WTC11 (cell line): ENCODE measurements at regions of chr2 and their contacts with region 1.

Region 1: DNA sequence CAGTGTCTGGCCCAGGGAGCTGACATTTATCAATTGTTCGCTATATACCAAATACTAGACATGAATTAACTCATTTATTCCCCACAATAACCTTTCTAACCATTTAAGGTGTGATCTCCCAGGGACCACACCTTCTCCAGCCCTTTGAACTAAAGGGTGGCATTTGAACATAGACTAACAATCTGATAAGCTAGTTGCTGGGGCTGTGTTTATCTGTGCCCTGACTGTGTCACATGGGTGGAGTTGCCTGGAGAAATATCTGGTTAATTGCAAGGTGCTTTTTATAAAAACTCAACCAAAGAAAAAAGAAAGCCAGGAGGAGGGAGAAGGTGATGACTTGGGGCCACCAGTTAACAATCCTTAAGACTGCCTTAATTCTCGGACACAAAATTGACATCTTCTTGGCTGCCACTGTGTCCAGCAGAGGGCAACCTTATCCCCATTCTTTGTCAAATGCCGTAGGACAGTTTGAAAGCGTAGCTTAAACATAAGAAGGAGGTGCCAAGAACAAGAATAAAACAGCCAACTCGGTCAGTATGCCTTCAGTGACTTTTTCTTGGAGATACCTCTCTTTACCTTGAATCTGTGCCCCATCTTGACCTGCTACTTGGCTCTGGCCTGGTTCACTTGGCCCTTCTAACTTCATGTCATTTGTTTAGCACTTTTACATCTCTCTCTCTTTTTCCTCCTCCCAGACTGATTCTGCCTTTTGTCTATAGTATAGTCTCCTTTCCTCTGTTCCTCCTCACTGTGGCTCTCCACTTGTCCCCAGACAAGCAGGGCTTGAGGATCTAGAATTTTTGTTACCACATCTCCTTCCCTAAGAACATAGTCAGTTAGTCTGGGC is 183.4 kb downstream of the MYO3B start:
- DNase-seq: peak; percentile 66
- ATAC-seq: peak; percentile 84
- H3K4me3 Mint-ChIP-seq: no peak overlapping the region
- H3K27ac Mint-ChIP-seq: no peak overlapping the region
- H3K4me1 Mint-ChIP-seq: peaks cover 41% of the 10 kb centered on the region
- H3K27me3 Mint-ChIP-seq: peaks cover 5% of the 10 kb centered on the region; the same call in 1 of the 2 replicates
- CTCF ChIP-seq: peak; percentile 36

Region 2: DNA sequence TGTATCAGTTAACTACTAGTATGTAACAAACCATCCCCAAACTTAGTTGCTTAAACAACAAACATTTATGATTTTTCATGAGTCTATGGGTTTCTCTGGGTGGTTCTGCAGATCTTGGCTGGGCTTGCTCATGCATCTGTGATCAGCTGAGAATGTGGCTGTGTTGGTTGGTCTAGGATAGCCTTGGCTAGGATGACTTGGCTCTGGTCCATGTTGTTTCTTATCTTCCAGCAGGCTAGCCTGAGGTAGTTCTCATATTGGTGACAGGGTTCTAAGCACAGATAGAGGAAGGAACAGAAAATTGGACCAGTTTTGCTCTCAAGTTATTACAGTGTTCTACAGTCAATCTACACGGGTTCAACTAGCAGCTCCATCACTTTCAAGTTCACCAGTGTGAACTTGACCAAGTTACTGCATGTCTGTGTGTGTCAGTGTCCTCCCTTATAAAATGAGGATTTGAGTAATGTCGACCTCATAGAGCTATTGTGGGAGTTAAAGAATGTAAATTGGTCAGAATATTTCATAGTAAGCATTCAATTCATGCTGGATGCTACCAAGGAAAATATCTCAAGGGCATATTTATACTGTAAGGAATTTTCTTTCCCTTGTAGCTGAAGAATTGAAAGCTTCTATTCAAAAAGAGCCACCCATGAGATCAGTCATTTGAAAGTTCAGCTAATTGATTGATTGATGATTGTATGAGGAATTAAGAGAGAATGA is 118.0 kb before region 1 on chr2:
- CTCF ChIA-PET with region 1: no interaction called
- POLR2A ChIA-PET with region 1: no interaction called
- DNase-seq: no peak
- ATAC-seq: no peak
- H3K4me3 Mint-ChIP-seq: no peak overlapping the region
- H3K27ac Mint-ChIP-seq: no peak overlapping the region
- H3K4me1 Mint-ChIP-seq: peaks cover 11% of the 10 kb centered on the region
- H3K27me3 Mint-ChIP-seq: no peaks in the 10 kb centered on the region; the same call in 1 of the 2 replicates
- CTCF ChIP-seq: no peak

Region 3: DNA sequence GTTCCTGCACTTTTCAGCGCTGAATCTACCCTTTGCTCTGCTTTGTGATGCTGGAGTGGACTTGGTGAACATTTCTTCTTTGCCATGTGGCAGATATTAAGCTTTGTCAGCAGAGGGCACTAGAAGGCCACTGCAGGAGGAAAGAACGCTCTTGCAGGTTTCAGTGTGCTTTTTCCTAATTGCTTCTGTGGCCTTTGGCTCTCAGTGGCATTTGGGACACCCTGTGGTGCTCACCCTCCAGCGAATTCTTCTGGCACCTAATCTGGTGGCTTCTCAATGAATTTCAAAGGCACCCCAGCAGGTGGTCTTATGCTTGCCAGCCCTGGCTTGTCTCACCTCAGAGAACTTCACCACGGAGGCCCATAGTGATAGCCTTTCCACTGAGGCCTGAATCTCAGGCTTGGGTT is 36.7 kb before region 1 on chr2:
- CTCF ChIA-PET with region 1: interaction called, 19 read pairs
- POLR2A ChIA-PET with region 1: no interaction called
- DNase-seq: peak; percentile 74
- ATAC-seq: peak; percentile 89
- H3K4me3 Mint-ChIP-seq: no peak overlapping the region
- H3K27ac Mint-ChIP-seq: no peak overlapping the region
- H3K4me1 Mint-ChIP-seq: peaks cover 15% of the 10 kb centered on the region
- H3K27me3 Mint-ChIP-seq: no peaks in the 10 kb centered on the region; the same call in 1 of the 2 replicates
- CTCF ChIP-seq: peak; percentile 61

Region 4: DNA sequence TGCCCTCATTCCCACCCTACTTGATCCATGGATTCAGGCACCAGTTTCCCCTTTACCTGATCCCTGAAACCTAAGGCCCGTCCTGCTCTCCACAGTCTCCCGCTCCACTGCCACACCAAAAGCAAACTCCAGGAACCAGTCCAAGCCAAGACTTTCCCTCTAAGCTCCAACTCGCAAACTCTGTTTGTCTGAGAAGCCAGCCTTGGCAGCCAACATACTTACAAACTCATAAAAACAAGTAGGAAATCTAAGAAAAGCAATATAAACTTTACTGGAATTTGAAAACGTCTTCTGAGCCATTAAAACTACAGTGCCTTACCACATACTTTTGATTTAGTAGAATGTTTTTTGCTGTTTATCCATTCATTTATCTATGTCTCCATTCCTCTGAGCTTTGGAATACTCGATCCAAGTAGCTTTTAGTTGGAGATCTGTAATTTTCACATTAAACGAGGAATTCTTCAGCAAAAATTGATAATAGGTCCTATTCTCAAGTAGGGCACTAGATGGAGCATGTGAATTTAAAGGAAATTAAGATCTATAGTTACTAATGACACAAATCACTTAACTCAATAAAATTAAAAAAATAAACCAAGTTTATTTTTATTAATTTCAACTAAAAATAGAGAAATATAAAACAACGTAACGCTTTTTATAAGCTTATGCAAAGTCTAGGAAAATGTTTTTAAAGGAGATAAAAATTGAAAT is 16.3 kb after region 1 on chr2:
- CTCF ChIA-PET with region 1: interaction called, 29 read pairs
- POLR2A ChIA-PET with region 1: no interaction called
- DNase-seq: no peak
- ATAC-seq: no peak
- H3K4me3 Mint-ChIP-seq: no peak overlapping the region
- H3K27ac Mint-ChIP-seq: no peak overlapping the region
- H3K4me1 Mint-ChIP-seq: peaks cover 8% of the 10 kb centered on the region
- H3K27me3 Mint-ChIP-seq: peaks cover 4% of the 10 kb centered on the region
- CTCF ChIP-seq: no peak

Region 5: DNA sequence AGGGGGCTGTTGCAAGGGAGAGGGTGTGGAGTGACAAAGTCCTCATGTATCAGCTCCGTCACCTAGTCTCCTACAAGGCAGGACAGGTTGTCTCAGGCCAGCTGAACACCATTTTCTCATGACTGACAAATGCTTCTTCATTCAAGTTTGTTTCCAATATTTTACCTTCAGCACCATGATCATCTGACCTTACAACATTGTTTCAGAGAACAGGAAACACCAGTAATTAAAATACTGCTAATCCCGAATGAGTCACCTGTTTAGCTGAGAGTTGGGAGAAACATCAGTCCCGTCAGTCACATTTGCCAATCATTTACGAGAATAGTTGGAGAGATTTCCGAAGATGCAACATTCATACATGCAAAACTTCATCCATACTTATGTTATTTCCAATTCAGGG is 328.2 kb after region 1 on chr2:
- CTCF ChIA-PET with region 1: no interaction called
- POLR2A ChIA-PET with region 1: no interaction called
- DNase-seq: no peak
- ATAC-seq: no peak
- H3K4me3 Mint-ChIP-seq: no peak overlapping the region
- H3K27ac Mint-ChIP-seq: no peak overlapping the region; the same call in 1 of the 2 replicates
- H3K4me1 Mint-ChIP-seq: peaks cover 17% of the 10 kb centered on the region
- H3K27me3 Mint-ChIP-seq: no peaks in the 10 kb centered on the region
- CTCF ChIP-seq: no peak